Activated T-helper 1 cell treated with anti-CD3 and anti-CD28 coated beads, Interleukin-12 subunit alpha, Interleukin-12 subunit beta, Interleukin-2, Interleukin-4 antibody, amounts not matched to agents 30 ng/mL and 10 ng/mL and 1 ng/mL, durations not matched to agents 14 hours and 24 hours and 36 hours (primary cell): ENCODE measurements at regions of chr3 and their contacts with region 1.

Region 1: GRCh38 chr3:191388823-191389222 is 58.5 kb upstream of the UTS2B start:
- DNase-seq: no peak
- H3K4me3 Mint-ChIP-seq: no peak overlapping the region
- H3K27ac Mint-ChIP-seq: no peak overlapping the region
- H3K4me1 Mint-ChIP-seq: no peaks in the 10 kb centered on the region
- H3K27me3 Mint-ChIP-seq: no peaks in the 10 kb centered on the region

Region 2: DNA sequence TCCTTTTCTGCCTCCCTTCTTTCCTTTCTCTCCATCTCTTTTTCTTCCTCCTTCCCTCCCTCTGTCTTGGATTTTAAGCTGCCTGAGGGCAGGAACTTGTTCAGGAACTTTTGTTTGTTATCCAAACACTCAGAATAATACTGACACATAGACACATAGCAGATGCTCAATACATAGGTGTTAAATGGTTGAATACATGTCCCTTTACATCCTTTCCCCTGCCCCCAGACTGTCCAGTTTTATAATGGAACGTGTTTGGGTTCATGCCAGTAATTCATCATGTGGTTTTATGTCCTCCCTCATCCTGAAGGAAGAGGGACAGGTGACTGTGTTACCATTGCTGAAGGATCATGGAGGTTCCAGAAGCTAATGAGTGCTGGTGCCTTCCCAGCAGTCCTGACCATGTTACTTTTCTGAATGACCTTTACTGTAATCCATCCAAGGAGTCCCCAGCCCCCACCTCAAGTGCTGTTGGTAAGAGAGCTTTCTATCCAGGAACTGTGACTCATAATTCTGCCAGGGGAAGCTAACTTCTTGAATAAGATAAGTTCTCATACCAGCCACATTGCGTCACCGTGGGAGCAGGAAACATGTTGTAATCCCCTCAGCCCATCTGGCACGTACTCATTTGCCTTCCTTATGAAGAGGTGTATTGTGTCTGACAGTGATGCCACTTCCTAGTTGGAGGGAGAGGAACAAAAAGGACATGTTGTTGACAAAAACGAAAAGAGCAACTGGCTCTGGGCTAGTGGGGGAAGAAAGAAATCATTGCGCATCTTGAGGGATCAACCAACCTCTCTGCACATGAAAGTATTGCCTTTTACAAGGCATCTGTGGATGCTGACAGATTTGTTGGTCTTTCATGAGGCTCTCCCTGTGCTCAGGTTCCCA is 822.5 kb before region 1 on chr3:
- intact Hi-C with region 1: no loop called
- DNase-seq: peak; percentile 67
- H3K4me3 Mint-ChIP-seq: peak overlapping the region; percentile 42
- H3K27ac Mint-ChIP-seq: peak overlapping the region; percentile 97
- H3K4me1 Mint-ChIP-seq: peaks cover 83% of the 10 kb centered on the region
- H3K27me3 Mint-ChIP-seq: no peaks in the 10 kb centered on the region

Region 3: GRCh38 chr3:191314109-191314728 is 74.6 kb before region 1 on chr3:
- intact Hi-C with region 1: no loop called
- DNase-seq: no peak
- H3K4me3 Mint-ChIP-seq: no peak overlapping the region
- H3K27ac Mint-ChIP-seq: no peak overlapping the region
- H3K4me1 Mint-ChIP-seq: no peaks in the 10 kb centered on the region
- H3K27me3 Mint-ChIP-seq: no peaks in the 10 kb centered on the region

Region 4: GRCh38 chr3:191328962-191329653 is 59.7 kb before region 1 on chr3 and contains the start of gene CCDC50:
- intact Hi-C with region 1: loop called (anchors 5 kb)
- DNase-seq: peak; percentile 48
- H3K4me3 Mint-ChIP-seq: peak within 1 kb of the TSS; percentile 85
- H3K27ac Mint-ChIP-seq: peak within 1 kb of the TSS; percentile 92
- H3K4me1 Mint-ChIP-seq: peaks cover 32% of the 10 kb centered on the region
- H3K27me3 Mint-ChIP-seq: peaks cover 13% of the 10 kb centered on the region
- total RNA-seq, gene CCDC50: 36.1 and 37.2 TPM in 2 replicates